HepG2 (cell line): ENCODE measurements at regions of chr3 and their contacts with region 1.

Region 1: GRCh38 chr3:168047190-168047795 is 48.4 kb downstream of the GOLIM4 start:
- DNase-seq: peak; percentile 76
- ATAC-seq: peak; percentile 87
- H3K4me3 ChIP-seq: no peak overlapping the region
- H3K27ac ChIP-seq: no peak overlapping the region
- H3K4me1 ChIP-seq: no peaks in the 10 kb centered on the region
- H3K27me3 ChIP-seq: no peaks in the 10 kb centered on the region
- CTCF ChIP-seq: peak; percentile 89
- EP300 ChIP-seq: no peak
- POLR2A ChIP-seq: no peak
- RAD21 ChIP-seq: peak; percentile 78

Region 2: DNA sequence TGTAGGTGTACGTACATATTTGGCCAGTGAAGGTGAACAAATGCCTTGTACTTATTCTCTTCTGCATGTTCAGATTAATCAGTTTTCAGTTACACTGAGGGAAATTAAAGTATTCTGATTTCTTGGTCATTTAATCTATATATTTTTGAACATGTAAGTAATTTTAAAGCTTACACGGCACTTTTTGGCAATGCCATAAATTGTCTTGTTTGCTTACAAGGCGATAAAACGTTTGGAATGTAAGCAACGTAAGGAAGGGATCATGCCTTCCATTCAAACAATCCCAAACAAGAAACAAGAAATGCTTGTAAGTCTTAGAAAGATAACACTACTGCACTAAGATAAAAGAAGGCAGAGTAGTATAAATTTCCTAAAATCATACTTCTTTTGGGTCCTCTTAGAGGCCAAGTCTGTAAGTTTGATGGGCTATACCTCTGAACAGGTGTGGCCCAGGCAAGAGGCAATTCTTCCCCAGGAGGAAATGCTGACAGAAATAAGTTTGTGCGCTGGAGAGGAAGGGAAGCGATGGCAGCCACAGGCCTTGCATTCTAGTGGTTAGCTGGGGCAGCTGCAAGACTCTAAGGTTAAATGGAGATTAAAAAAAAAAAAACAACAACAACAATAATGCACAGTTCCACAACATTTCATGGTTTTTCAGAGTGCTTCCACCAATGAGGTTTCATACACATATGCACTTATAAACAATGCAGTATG is 25.4 kb before region 1 on chr3:
- CTCF ChIA-PET with region 1: no interaction called
- POLR2A ChIA-PET with region 1: no interaction called
- in situ Hi-C with region 1: no loop called
- intact Hi-C with region 1: no loop called
- DNase-seq: no peak
- ATAC-seq: no peak
- H3K4me3 ChIP-seq: no peak overlapping the region
- H3K27ac ChIP-seq: no peak overlapping the region
- H3K4me1 ChIP-seq: no peaks in the 10 kb centered on the region
- H3K27me3 ChIP-seq: no peaks in the 10 kb centered on the region
- CTCF ChIP-seq: no peak
- EP300 ChIP-seq: no peak
- POLR2A ChIP-seq: no peak
- RAD21 ChIP-seq: no peak

Region 3: GRCh38 chr3:168123201-168124176 is 76.2 kb after region 1 on chr3:
- CTCF ChIA-PET with region 1: no interaction called
- POLR2A ChIA-PET with region 1: no interaction called
- in situ Hi-C with region 1: no loop called
- intact Hi-C with region 1: loop called (anchors 2 kb)
- DNase-seq: no peak
- ATAC-seq: no peak
- H3K4me3 ChIP-seq: no peak overlapping the region
- H3K27ac ChIP-seq: no peak overlapping the region
- H3K4me1 ChIP-seq: peaks cover 4% of the 10 kb centered on the region
- H3K27me3 ChIP-seq: no peaks in the 10 kb centered on the region
- CTCF ChIP-seq: no peak
- EP300 ChIP-seq: no peak
- POLR2A ChIP-seq: no peak
- RAD21 ChIP-seq: no peak

Region 4: GRCh38 chr3:168847291-168847883 is 800.1 kb after region 1 on chr3:
- CTCF ChIA-PET with region 1: no interaction called
- POLR2A ChIA-PET with region 1: no interaction called
- in situ Hi-C with region 1: no loop called
- intact Hi-C with region 1: loop called (anchors 5 kb)
- DNase-seq: no peak
- ATAC-seq: peak; percentile 65
- H3K4me3 ChIP-seq: no peak overlapping the region; a peak in 1 of 6 replicates
- H3K27ac ChIP-seq: no peak overlapping the region
- H3K4me1 ChIP-seq: peaks cover 9% of the 10 kb centered on the region
- H3K27me3 ChIP-seq: peaks cover 0 to 4% of the 10 kb centered on the region in 2 experiments; a peak in 1 of 5 replicates
- CTCF ChIP-seq: peak; percentile 64
- EP300 ChIP-seq: no peak
- POLR2A ChIP-seq: no peak
- RAD21 ChIP-seq: 0 out of 2 replicates have a peak, but pooled peaks have one; percentile 32